Ovary (tissue), 10 donors: ENCODE measurements at regions of chr2 and their contacts with region 1.

Region 1: DNA sequence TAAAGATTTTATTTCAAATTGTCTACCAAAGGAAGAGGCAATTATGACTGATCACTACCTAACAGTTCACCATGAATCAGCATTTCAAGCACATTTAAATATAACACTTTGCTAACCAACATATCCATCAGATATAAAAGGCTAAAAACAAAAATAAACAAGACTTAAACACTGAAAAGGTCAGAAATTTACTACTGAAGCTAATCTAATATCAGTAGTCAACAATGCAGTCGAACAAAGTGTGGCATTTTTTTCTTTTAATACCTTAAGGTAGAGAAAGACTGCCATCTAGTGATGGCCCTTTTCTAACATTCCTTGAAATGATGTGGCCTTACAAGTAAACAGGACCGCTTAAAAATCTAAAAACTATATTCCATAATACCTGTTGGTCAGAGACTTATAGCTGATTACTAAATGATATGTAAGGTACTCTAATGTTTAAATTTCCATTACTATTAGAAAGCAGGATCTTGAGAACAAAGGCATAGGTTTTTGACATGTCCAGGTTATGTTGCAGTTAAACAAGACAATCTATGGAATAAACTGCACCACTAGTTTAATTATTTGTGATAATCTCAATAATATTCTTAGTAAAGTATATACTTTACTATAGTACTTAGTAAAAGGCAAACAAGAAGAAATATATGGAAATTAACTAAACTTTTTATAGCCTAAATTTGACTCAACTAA is 80.0 kb downstream of the EXOC6B start:
- DNase-seq: no peak
- H3K4me3 ChIP-seq: no peak overlapping the region
- H3K27ac ChIP-seq: no peak overlapping the region
- H3K4me1 ChIP-seq: peaks cover 4% of the 10 kb centered on the region
- H3K27me3 ChIP-seq: no peaks in the 10 kb centered on the region
- CTCF ChIP-seq: peak; percentile 23 to 68 (median 60)
- EP300 ChIP-seq: no peak
- POLR2A ChIP-seq: no peak

Region 2: DNA sequence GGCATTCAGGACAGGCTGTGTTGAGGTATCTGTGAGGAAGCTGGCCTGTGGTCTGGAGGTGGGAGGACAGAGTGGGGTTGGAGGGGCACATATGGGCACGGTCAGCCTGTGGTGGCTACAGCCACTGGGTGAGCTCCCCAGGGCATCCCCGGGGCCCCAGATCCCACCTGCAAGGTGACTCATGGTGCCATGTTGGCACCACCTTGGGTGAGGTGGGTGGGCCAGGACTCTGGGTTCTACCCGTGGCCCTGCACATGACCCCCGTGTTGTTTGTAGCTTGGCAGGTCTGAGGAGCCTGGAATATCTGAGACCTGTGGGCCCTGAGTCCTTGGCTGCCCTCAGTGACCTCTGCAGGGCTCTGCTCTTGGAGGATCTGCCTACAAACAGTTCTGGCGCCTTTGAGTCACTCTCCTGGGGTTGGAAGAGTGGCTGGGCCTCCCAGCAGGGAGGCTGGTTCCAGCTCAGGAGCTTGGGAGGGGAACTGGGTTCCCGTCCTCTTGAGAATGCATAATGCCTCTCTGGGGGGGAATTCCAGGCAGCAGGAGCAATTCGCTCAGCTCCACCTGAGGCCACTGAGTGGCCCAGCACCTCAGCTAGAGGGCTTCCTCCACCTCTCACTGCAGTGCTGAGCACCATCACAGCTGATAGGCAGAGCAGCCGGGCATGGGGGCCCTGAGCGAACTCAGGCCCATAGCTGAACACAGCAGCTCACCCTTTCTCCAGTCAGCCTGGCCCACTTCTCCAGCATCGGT is 1187.3 kb before region 1 on chr2:
- intact Hi-C with region 1: loop called in 1 of 4 experiments (anchors 10 kb)
- DNase-seq: no peak
- H3K4me3 ChIP-seq: no peak overlapping the region
- H3K27ac ChIP-seq: no peak overlapping the region
- H3K4me1 ChIP-seq: no peaks in the 10 kb centered on the region
- H3K27me3 ChIP-seq: no peaks in the 10 kb centered on the region
- CTCF ChIP-seq: no peak
- EP300 ChIP-seq: no peak
- POLR2A ChIP-seq: no peak

Region 3: DNA sequence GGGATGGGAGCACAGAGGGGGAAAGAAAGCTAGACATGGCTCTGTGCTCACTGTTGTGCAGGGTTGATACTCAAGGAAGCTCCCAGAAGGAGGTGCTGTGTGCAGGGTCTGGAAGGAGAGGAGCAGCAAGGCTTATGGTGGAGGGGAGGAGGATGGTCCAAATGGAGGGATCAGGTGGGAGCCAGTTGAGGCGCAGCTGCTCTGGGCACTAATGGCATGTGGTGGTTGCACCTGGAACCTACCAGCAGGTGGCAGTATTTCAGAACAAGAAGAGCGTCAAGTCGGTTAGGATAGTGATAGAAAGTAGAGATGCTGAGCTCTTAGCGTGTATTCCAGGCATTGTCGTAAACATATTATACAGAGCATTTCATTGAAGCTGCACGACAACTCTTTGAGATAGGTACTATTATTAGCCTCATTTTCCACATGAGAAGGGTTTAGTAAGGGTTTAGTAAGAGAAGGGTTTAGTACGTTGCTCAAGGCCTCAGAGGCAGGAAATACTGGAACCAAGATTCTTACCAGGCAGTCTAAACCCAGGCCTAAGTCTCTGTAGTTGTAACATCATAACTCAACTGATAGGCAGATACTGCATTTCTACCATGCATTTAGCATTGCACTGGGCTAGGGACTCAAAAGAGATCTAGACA is 821.8 kb before region 1 on chr2:
- intact Hi-C with region 1: loop called in 1 of 4 experiments (anchors 10 kb)
- DNase-seq: peak; percentile 31 to 60 (median 56)
- H3K4me3 ChIP-seq: no peak overlapping the region
- H3K27ac ChIP-seq: no peak overlapping the region
- H3K4me1 ChIP-seq: no peaks in the 10 kb centered on the region
- H3K27me3 ChIP-seq: no peaks in the 10 kb centered on the region
- CTCF ChIP-seq: peak; percentile 40 to 50 (median 42)
- EP300 ChIP-seq: no peak
- POLR2A ChIP-seq: no peak